WTC11 (cell line): ENCODE measurements at regions of chr1 and their contacts with region 1.

Region 1: GRCh38 chr1:63024132-63024531 is 240.2 kb downstream of the ATG4C start:
- DNase-seq: no peak
- ATAC-seq: no peak
- H3K4me3 Mint-ChIP-seq: no peak overlapping the region
- H3K27ac Mint-ChIP-seq: no peak overlapping the region
- H3K4me1 Mint-ChIP-seq: peaks cover 11% of the 10 kb centered on the region; the same call in 1 of the 2 replicates
- H3K27me3 Mint-ChIP-seq: no peaks in the 10 kb centered on the region; the same call in 1 of the 2 replicates
- CTCF ChIP-seq: no peak

Region 2: DNA sequence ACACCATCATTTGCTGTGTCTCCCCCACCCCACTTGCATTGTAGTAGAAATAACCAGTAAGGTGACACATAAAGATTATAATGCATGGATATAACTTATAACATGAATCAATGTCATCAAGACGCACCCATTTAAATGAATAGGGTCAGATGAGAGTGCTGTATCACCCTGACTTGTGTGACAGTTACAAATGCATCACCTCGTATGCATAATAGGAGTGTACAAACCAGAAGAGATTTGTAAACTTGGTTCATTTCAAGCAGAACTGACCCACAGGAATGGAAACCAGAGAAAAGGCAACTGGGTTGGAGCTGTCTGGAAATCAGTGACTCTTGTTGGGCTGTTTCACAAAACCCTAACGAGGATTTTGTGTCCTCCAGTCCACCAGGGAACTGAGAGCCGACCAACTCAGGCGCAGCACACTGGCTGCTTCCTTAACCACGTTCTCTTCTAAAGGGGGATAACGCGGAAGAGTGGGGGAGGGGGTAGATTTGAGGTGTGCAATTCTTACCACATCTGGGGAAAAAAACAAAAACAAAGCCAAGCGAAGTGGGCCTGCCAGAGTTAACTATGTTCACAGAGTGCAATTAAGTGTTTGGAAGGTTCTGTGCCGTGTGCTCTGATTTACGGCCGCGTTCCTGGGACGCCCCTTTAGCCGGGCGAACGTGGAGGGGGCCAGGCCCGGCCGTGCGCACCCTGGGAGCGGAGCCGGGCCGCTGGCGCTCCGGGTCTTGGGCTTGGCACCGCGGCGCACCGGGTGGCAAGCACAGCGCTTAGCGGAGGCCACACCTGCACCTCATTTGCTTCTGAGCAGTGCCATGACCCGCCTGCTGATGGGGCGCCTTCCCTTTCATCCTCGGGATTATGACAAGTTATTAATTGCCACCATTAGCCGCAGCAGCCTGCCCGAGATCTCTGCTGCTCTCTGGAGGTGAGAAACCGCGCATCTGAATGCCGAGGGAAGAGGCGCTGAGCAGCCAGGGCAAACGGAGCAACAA is 49.5 kb after region 1 on chr1:
- CTCF ChIA-PET with region 1: no interaction called
- POLR2A ChIA-PET with region 1: no interaction called
- DNase-seq: peak; percentile 43
- ATAC-seq: peak; percentile 86
- H3K4me3 Mint-ChIP-seq: peak overlapping the region; percentile 72
- H3K27ac Mint-ChIP-seq: no peak overlapping the region
- H3K4me1 Mint-ChIP-seq: peaks cover 20% of the 10 kb centered on the region
- H3K27me3 Mint-ChIP-seq: peaks cover 42% of the 10 kb centered on the region
- CTCF ChIP-seq: no peak

Region 3: GRCh38 chr1:63428815-63429214 is 404.7 kb after region 1 on chr1:
- CTCF ChIA-PET with region 1: no interaction called
- POLR2A ChIA-PET with region 1: interaction called, 11 read pairs
- DNase-seq: no peak
- ATAC-seq: no peak
- H3K4me3 Mint-ChIP-seq: no peak overlapping the region
- H3K27ac Mint-ChIP-seq: no peak overlapping the region
- H3K4me1 Mint-ChIP-seq: no peaks in the 10 kb centered on the region
- H3K27me3 Mint-ChIP-seq: no peaks in the 10 kb centered on the region
- CTCF ChIP-seq: no peak